GM18951 (cell line): ENCODE measurements at regions of chr9 and their contacts with region 1.

Region 1: GRCh38 chr9:36102742-36103495 is 33.6 kb upstream of the GLIPR2 start:
- POLR2A ChIP-seq: no peak

Region 2: DNA sequence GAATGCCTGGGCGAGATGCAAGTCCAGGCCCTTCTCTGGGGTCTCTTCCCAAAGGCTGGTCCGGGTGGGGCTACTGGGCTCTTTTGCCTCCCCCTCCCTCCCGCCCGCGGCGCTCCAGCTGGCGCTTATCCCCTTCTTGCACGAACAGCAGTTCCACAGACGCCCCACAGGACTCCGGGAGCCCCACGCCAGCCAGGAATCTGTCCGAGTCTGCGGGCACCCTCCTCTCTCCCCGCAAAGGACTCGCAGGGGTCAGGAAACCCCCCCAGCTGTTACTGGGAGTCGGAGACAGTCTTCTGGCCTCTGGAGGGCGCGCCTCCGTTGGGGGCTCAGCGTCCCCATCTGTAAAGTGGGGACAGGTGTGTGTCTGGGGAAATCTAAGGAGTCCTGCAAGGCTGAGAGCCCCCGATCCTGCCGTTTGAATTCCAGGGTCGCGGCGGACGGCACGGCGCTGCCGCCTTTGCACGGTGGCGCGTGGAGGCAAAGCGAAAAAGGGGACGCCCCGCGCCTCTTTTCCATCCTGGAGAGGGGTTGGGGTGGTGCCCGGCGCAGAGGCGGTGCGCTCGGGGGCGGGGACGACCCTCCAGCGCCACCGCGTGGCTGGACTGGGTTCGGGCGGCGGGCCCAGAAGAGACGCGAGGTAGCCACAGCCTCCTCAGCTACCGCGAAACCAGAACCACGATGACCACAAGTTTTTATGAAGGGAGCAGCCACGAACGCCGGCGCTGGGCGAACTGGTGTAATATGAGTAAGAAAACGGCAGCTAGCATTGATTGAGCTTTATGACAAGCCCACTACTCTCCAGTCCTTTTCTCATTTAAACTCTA is 63.4 kb after region 1 on chr9:
- in situ Hi-C with region 1: loop called (anchors 5 kb)
- POLR2A ChIP-seq: no peak

Region 3: DNA sequence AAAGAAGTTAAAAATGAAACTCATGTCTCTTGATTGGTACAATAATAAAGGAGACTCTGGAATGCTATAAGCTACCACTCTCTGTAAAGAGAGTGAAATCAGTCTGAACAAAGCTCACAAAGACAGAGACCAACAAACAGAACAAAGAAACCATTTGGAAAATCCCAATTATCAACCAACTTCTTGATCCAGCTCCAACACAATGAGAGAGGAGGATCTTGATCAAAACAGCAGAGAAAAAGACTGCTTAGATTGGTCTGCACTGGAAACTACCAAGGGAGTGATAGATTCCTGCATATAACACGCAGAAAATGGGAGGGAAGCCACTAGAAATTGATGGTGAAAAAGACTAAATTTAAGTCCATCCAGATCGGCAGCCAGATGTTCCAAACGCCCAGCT is 320.3 kb after region 1 on chr9:
- in situ Hi-C with region 1: no loop called
- POLR2A ChIP-seq: no peak